ENCODE measurements at regions of chr19 and their contacts with region 1.

Region 1: GRCh38 chr19:10245189-10245939 is 6.7 kb upstream of the MRPL4 start:
- DNase-seq: no peak
- H3K4me3 ChIP-seq: no peak overlapping the region
- H3K27ac ChIP-seq: no peak overlapping the region
- H3K4me1 ChIP-seq: peaks cover 6% of the 10 kb centered on the region
- H3K27me3 ChIP-seq: no peaks in the 10 kb centered on the region
- CTCF ChIP-seq: no peak

Region 2: GRCh38 chr19:9923440-9923839 is 321.9 kb before region 1 on chr19:
- CTCF ChIA-PET with region 1: no interaction called
- dilution Hi-C with region 1: loop called (anchors 25 kb)
- in situ Hi-C with region 1: loop called in 1 of 2 experiments (anchors 10 kb)
- intact Hi-C with region 1: no loop called
- DNase-seq: no peak
- H3K4me3 ChIP-seq: no peak overlapping the region
- H3K27ac ChIP-seq: no peak overlapping the region
- H3K4me1 ChIP-seq: no peaks in the 10 kb centered on the region
- H3K27me3 ChIP-seq: no peaks in the 10 kb centered on the region
- CTCF ChIP-seq: no peak

Region 3: DNA sequence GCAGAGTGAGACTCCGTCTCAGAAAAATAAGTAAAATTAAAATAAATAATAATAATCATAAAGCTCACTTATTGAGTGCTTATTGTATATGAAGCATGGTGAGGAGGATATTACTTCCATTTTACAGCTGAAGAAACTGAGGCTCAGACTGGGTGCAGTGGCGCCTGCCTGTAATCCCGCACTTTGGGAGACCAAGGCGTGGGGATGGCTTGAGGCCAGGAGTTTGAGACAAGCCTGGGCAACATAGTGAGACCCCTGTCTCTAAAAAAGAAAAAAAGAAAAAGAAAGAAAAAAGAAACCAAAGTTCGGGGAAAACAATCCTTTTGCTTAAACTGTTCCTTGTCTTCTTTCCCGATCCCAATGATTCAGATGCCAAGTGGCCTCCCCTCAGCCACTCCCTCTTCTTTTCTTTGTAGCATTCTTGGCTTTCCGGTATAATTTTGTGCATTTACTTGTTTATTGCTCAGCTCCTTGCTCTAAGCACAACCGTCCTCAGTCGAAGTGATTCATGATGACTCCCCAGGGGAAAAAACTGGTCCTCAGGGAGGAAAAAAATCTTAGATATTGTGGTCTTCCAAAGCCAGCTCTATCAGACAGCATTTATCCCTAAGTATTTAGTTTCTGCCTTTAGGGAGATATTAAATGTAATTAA is 124.7 kb before region 1 on chr19:
- CTCF ChIA-PET with region 1: no interaction called
- dilution Hi-C with region 1: no loop called
- in situ Hi-C with region 1: loop called in 1 of 2 experiments (anchors 10 kb)
- intact Hi-C with region 1: loop called (anchors 1 kb)
- DNase-seq: peak; percentile 88
- H3K4me3 ChIP-seq: no peak overlapping the region
- H3K27ac ChIP-seq: no peak overlapping the region
- H3K4me1 ChIP-seq: peaks cover 5% of the 10 kb centered on the region
- H3K27me3 ChIP-seq: no peaks in the 10 kb centered on the region
- CTCF ChIP-seq: no peak

Region 4: DNA sequence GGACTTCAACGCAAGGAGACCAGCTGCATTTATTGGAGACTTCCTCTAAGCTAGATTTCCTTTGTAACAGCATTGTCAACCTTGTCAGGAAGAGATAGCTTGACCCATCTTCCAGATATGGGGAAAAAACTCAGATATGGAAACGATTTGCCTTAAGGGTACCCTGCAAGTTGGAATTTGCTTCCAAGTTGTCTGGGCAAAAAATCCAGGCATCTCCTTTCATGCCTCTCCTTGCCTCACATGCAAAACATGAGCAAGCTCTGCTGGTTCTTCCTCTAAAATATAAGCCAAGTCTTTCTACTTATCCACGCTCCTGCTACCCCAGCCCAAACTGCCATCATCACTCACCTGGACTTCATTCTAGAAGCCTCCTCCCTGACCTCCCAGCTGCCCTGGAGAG is 44.2 kb before region 1 on chr19:
- CTCF ChIA-PET with region 1: no interaction called
- dilution Hi-C with region 1: loop called (anchors 5 kb)
- in situ Hi-C with region 1: no loop called
- intact Hi-C with region 1: no loop called
- DNase-seq: no peak
- H3K4me3 ChIP-seq: no peak overlapping the region
- H3K27ac ChIP-seq: no peak overlapping the region
- H3K4me1 ChIP-seq: no peaks in the 10 kb centered on the region
- H3K27me3 ChIP-seq: no peaks in the 10 kb centered on the region
- CTCF ChIP-seq: no peak

Region 5: GRCh38 chr19:10292206-10292788 is 46.9 kb after region 1 on chr19:
- CTCF ChIA-PET with region 1: no interaction called
- dilution Hi-C with region 1: loop called (anchors 5 kb)
- in situ Hi-C with region 1: no loop called
- intact Hi-C with region 1: no loop called
- DNase-seq: peak; percentile 36
- H3K4me3 ChIP-seq: peak overlapping the region; percentile 45 to 51 (median 50)
- H3K27ac ChIP-seq: no peak overlapping the region
- H3K4me1 ChIP-seq: peaks cover 31% of the 10 kb centered on the region
- H3K27me3 ChIP-seq: no peaks in the 10 kb centered on the region
- CTCF ChIP-seq: no peak

Measured in mammary epithelial cell (primary cell).